Activated T-helper 2 cell treated with anti-CD3 and anti-CD28 coated beads, Interferon-gamma antibody, Interleukin-2, Interleukin-4, amounts not matched to agents 10 μg/mL and 5 μg/mL and 100 μg/mL, durations not matched to agents 14 hours and 24 hours and 36 hours (primary cell): ENCODE measurements at regions of chr2 and their contacts with region 1.

Region 1: DNA sequence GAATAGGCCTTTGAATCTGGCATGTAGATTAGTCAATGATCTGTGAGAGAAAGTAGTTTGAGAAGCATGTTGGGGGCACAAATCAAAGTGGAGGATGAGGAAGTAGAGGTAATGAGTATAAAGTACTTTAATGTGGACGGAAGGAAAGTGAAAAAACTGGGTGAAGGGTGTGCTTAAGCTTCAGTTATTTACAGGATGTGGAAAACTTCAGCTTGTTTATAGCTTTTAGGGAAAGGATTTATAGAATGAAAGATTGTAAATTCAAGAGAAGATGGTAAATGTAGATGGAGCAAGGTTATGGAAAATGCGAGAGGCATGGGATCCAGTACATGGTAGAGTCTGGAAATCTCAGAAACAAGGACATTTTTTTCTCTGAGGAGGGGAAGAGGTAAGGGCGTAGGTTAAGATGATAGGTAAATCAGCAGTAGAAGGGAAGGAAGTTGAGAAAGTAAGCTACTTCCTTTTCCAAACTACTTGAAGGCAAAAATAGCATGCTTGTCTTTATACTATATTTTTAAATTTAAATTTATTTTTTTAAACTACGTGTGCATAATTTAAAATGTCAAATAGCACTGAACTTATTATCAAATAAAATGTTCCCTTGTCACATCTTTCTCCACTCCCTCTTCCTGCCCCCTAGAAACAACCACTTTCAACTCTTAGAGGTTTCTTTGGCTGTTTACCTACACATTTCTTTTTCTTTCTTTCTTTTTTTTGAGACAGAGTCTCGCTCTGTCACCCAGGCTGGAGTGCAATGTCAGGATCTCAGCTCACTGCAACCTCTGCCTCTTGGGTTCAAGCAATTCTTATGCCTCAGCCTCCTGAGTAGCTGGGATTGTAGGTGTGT is 8.5 kb downstream of the FAM117B start:
- DNase-seq: no peak
- H3K4me3 Mint-ChIP-seq: peak overlapping the region; percentile 51
- H3K27ac Mint-ChIP-seq: peak overlapping the region; percentile 85
- H3K4me1 Mint-ChIP-seq: peaks cover 44% of the 10 kb centered on the region
- H3K27me3 Mint-ChIP-seq: no peaks in the 10 kb centered on the region

Region 2: GRCh38 chr2:202671317-202672035 is 28.2 kb after region 1 on chr2:
- intact Hi-C with region 1: loop called (anchors 1 kb)
- DNase-seq: no peak
- H3K4me3 Mint-ChIP-seq: no peak overlapping the region
- H3K27ac Mint-ChIP-seq: no peak overlapping the region
- H3K4me1 Mint-ChIP-seq: peaks cover 37% of the 10 kb centered on the region
- H3K27me3 Mint-ChIP-seq: no peaks in the 10 kb centered on the region

Region 3: GRCh38 chr2:202690321-202690900 is 47.2 kb after region 1 on chr2:
- intact Hi-C with region 1: no loop called
- DNase-seq: no peak
- H3K4me3 Mint-ChIP-seq: no peak overlapping the region
- H3K27ac Mint-ChIP-seq: peak overlapping the region; percentile 23
- H3K4me1 Mint-ChIP-seq: peaks cover 15% of the 10 kb centered on the region
- H3K27me3 Mint-ChIP-seq: no peaks in the 10 kb centered on the region

Region 4: GRCh38 chr2:202780514-202781021 is 137.3 kb after region 1 on chr2:
- intact Hi-C with region 1: loop called (anchors 2 kb)
- DNase-seq: no peak
- H3K4me3 Mint-ChIP-seq: no peak overlapping the region
- H3K27ac Mint-ChIP-seq: peak overlapping the region; percentile 42
- H3K4me1 Mint-ChIP-seq: peaks cover 15% of the 10 kb centered on the region
- H3K27me3 Mint-ChIP-seq: no peaks in the 10 kb centered on the region